ENCODE measurements at regions of chr10 and their contacts with region 1.

Region 1: DNA sequence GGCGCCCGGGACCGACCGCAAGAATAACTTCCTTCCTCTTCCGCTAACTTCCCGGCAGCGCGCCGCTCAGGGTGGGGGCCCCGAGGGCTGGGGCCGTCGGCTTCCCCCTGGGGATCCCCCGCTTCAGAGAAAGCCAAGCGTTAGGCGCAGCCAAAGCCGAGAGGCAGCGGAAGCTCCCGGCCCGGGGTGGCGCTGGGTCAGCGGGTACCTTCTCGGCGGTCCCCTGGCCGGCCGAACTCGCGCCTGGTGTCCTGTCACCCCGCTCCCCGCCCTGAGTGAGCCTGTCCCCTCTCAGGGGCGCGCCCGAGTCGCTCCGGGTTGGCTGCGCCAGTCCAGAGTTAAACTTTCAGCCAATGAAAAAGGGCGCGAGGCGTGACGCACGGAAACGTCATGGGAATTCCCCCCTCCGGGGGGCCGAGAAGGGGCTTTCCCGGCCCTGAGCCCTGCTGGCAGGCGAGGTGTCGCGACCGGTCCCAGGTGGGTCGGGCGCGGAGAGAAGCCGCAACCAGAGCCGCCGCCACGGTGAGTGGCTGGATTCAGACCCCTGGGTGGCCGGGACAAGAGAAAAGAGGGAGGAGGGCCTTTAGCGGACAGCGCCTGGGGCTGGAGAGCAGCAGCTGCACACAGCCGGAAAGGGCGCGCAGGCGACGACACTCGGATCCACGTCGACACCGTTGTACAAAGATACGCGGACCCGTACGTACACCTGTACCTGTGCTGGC is 1.3 kb upstream of the NFKB2 start:
- DNase-seq: peak; percentile 79
- ATAC-seq: peak; percentile 92
- H3K4me3 ChIP-seq: peak overlapping the region; percentile 67 to 89
- H3K27ac ChIP-seq: peak overlapping the region; percentile 63
- H3K4me1 ChIP-seq: peaks cover 23% of the 10 kb centered on the region
- H3K27me3 ChIP-seq: no peaks in the 10 kb centered on the region; the same call in 1 of the 2 replicates
- CTCF ChIP-seq: peak; percentile 86

Region 2: GRCh38 chr10:102371295-102371694 is 22.9 kb before region 1 on chr10:
- CTCF ChIA-PET with region 1: no interaction called
- POLR2A ChIA-PET with region 1: interaction called, 12 read pairs
- in situ Hi-C with region 1: no loop called
- intact Hi-C with region 1: no loop called
- DNase-seq: no peak
- ATAC-seq: no peak
- H3K4me3 ChIP-seq: no peak overlapping the region
- H3K27ac ChIP-seq: no peak overlapping the region
- H3K4me1 ChIP-seq: no peaks in the 10 kb centered on the region
- H3K27me3 ChIP-seq: no peaks in the 10 kb centered on the region
- CTCF ChIP-seq: no peak

Region 3: GRCh38 chr10:102426803-102427287 is 32.6 kb after region 1 on chr10:
- CTCF ChIA-PET with region 1: interaction called, 6 read pairs
- POLR2A ChIA-PET with region 1: interaction called, 19 read pairs
- in situ Hi-C with region 1: no loop called
- intact Hi-C with region 1: no loop called
- DNase-seq: no peak
- ATAC-seq: no peak
- H3K4me3 ChIP-seq: no peak overlapping the region
- H3K27ac ChIP-seq: no peak overlapping the region
- H3K4me1 ChIP-seq: peaks cover 15% of the 10 kb centered on the region
- H3K27me3 ChIP-seq: no peaks in the 10 kb centered on the region
- CTCF ChIP-seq: no peak

Measured in Panc1 (cell line).